Caco-2 (cell line): ENCODE measurements at regions of chr4 and their contacts with region 1.

Region 1: DNA sequence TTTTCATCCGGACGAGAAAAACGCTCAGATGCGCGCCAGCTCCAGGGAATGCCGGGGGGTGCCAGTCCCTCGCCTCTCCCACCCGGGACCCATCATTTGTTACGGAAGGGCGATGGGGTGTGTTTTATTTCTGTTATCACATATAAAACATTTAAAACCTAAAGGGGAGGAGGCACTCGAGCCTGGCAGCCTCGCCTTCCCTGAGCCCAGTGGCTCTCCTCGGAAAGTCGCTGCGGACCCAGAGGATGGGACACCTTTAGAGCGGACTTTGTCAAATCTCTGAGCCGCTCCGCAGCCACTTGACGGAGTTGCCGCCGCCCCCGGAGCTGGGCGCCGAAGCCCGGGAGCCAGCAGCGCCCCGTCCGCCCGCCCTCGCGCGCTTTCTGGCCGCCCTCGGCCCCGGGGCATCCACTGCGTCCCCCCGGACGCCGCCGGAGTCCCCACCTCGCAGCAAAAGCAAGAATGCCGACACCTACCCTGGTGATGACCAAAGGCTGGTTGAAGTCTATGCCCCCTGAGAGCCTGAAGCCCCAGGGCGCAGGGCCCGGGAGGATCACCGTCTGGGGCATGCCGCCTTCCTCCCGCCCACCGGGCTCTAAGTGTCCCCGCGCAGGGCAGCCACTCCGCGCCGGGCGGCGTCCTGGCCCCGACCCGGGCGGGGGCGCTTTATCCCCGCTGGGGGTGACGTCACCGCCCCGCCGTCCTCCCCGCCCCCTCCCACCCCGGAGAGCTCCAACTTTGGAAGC is at the start of gene PDLIM3:
- DNase-seq: peak; percentile 52 to 73
- H3K4me3 ChIP-seq: peak within 1 kb of the TSS; percentile 55
- H3K4me3 Mint-ChIP-seq: peak within 1 kb of the TSS; percentile 72
- H3K27ac Mint-ChIP-seq: no peak within 1 kb of the TSS
- H3K4me1 ChIP-seq: peaks cover 4% of the 10 kb centered on the region; the same call in 1 of the 2 replicates
- H3K4me1 Mint-ChIP-seq: no peaks in the 10 kb centered on the region
- H3K27me3 ChIP-seq: peaks cover 2% of the 10 kb centered on the region
- H3K27me3 Mint-ChIP-seq: peaks cover 5% of the 10 kb centered on the region
- CTCF ChIP-seq: no peak
- total RNA-seq, gene PDLIM3: 3.6 and 4.8 TPM in 2 replicates

Region 2: GRCh38 chr4:183738081-183738673 is 1796.9 kb before region 1 on chr4:
- CTCF ChIA-PET with region 1: no interaction called
- POLR2A ChIA-PET with region 1: no interaction called
- intact Hi-C with region 1: no loop called
- DNase-seq: no peak
- H3K4me3 ChIP-seq: no peak overlapping the region
- H3K4me3 Mint-ChIP-seq: no peak overlapping the region
- H3K27ac Mint-ChIP-seq: no peak overlapping the region
- H3K4me1 ChIP-seq: no peaks in the 10 kb centered on the region
- H3K4me1 Mint-ChIP-seq: no peaks in the 10 kb centered on the region
- H3K27me3 ChIP-seq: no peaks in the 10 kb centered on the region
- H3K27me3 Mint-ChIP-seq: no peaks in the 10 kb centered on the region
- CTCF ChIP-seq: no peak

Region 3: DNA sequence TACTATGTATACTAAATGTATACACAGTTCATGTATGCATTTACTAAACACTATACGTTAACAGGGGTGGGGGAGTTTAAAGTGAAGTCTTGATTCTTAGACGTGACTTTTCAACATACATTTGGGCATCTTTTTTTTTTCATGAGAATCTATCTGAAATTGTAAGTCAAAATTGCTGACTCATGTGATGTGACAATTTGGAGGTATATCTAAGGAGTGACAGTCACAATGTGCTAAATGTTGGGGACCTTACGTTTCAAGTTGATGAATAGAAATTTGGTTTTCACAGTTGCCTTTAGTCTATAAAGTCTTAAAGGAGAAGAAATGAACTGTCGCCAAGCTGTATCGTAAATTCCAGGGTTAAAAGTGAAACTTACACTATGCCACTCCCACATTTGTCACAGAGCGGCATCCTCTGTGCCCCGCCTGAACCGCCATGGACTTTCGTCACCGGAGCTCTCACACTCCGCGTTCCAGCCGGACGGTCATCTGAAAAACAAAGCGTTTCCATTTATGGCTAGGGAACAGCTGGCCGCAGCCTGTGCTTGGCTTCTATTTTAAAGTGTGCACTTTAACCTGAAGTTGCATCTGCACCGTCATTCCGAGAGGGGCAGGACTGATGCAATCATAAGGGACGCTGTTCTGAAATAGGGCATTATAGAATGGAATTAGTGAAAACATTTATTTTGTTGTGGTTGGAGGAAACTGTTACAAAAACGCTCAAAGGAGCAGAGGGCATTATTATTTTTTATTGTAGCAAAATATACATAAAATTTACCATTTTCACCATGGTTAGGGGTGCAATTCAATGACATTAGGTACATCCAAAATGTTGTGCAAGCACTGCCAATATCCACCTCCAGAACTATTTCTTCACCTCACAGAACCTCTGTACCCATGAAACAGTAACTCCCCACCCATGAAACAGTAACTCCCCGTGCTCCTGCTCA is 30.7 kb before region 1 on chr4:
- CTCF ChIA-PET with region 1: no interaction called
- POLR2A ChIA-PET with region 1: interaction called, 3 read pairs
- intact Hi-C with region 1: loop called (anchors 1 kb)
- DNase-seq: peak; percentile 85 to 90
- H3K4me3 ChIP-seq: peak overlapping the region; percentile 26
- H3K4me3 Mint-ChIP-seq: peak overlapping the region; percentile 73
- H3K27ac Mint-ChIP-seq: peak overlapping the region; percentile 86
- H3K4me1 ChIP-seq: peaks cover 12% of the 10 kb centered on the region
- H3K4me1 Mint-ChIP-seq: peaks cover 8% of the 10 kb centered on the region
- H3K27me3 ChIP-seq: no peaks in the 10 kb centered on the region
- H3K27me3 Mint-ChIP-seq: no peaks in the 10 kb centered on the region
- CTCF ChIP-seq: no peak

Region 4: DNA sequence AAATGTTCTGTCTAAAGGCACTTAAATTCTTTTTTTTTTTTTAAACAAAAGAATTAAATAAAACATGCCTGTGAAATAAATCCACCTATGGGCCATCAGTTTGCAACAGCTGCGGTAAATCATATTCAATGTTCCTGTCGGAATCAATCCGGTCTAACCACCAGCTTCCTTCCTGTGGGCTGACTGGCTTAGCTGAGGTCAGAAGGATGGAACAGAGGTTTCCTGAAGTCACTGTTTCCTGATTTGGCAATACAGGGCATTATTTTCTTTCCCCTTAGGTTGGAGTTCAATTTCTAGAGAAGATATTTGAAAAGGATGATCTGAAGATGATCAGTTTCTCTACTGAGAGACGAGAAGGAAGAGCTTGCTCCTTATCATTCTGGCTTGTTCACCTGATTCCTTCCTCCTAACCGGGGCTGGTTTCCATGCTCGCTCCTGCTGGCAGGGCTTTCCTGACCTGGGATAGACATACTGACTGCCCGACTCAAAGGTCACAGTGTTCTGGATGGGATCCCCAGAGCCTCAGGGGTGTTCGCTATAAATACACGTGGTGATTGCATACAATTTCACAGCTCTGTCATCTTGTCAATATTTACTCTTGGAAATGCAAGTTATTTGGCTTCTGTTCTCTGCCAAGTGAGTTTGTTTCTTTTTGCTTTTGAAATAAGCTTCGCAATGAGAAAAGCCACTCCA is 21.4 kb before region 1 on chr4:
- CTCF ChIA-PET with region 1: no interaction called
- POLR2A ChIA-PET with region 1: interaction called, 10 read pairs
- intact Hi-C with region 1: loop called (anchors 1 kb)
- DNase-seq: peak; percentile 44 to 50
- H3K4me3 ChIP-seq: no peak overlapping the region
- H3K4me3 Mint-ChIP-seq: peak overlapping the region; percentile 60
- H3K27ac Mint-ChIP-seq: peak overlapping the region; percentile 5
- H3K4me1 ChIP-seq: peaks cover 9% of the 10 kb centered on the region; the same call in 1 of the 2 replicates
- H3K4me1 Mint-ChIP-seq: no peaks in the 10 kb centered on the region
- H3K27me3 ChIP-seq: no peaks in the 10 kb centered on the region
- H3K27me3 Mint-ChIP-seq: no peaks in the 10 kb centered on the region
- CTCF ChIP-seq: no peak